AG04450 (cell line): ENCODE measurements at regions of chr16 and their contacts with region 1.

Region 1: GRCh38 chr16:67943619-67944504 is at the start of gene LCAT:
- DNase-seq: no peak
- H3K4me3 ChIP-seq: no peak within 1 kb of the TSS
- H3K27ac ChIP-seq: peak within 1 kb of the TSS; percentile 21
- H3K27me3 ChIP-seq: no peaks in the 10 kb centered on the region
- CTCF ChIP-seq: no peak
- polyA plus RNA-seq, gene LCAT: 5.2 and 7.9 TPM in 2 replicates

Region 2: GRCh38 chr16:67571981-67572431 is 371.9 kb before region 1 on chr16:
- CTCF ChIA-PET with region 1: interaction called, 11 read pairs
- POLR2A ChIA-PET with region 1: no interaction called
- DNase-seq: no peak
- H3K4me3 ChIP-seq: no peak overlapping the region
- H3K27ac ChIP-seq: peak overlapping the region; percentile 65
- H3K27me3 ChIP-seq: no peaks in the 10 kb centered on the region
- CTCF ChIP-seq: no peak